ENCODE measurements at regions of chr18 and their contacts with region 1.

Region 1: DNA sequence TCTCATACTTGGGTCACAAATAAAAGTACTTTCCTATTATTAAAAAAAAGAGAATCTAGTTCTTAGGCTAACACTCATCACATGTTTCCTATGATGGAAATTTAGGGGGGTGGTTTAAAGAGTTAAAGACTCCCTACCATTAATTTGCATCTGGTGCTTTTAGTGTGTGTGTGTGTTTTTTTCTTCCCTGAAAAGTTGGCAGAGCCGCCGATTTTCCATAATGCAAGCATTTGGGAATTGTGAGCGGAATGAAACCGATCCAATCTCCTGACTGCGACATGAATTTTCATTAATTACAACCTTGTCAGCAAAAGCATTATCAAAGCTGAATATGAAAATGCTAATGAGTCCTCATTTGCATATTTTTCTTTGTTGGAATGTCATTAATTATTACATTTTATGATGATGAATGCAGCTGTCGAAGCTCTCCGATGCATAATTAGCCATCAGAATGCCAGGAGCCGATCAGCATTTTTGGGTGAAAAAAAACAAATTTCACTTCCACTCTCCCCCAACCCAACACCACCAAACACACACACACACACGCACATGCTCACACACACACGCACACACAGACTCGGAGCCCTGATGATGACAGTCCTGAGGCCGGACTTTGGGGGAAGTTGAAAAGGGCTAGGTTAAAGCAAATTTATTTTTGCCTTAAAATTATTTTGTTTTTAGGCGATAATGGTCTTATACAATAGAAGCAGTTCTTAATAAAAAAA is 165.4 kb downstream of the TCF4 start:
- DNase-seq: peak; percentile 32
- H3K4me3 ChIP-seq: peak overlapping the region; percentile 61
- H3K27ac ChIP-seq: peak overlapping the region; percentile 88
- H3K4me1 ChIP-seq: peaks cover 38% of the 10 kb centered on the region
- H3K27me3 ChIP-seq: no peaks in the 10 kb centered on the region
- CTCF ChIP-seq: no peak

Region 2: GRCh38 chr18:55582325-55582724 is 159.7 kb after region 1 on chr18:
- intact Hi-C with region 1: loop called (anchors 5 kb)
- DNase-seq: no peak
- H3K4me3 ChIP-seq: no peak overlapping the region
- H3K27ac ChIP-seq: peak overlapping the region; percentile 25
- H3K4me1 ChIP-seq: peaks cover 75% of the 10 kb centered on the region
- H3K27me3 ChIP-seq: no peaks in the 10 kb centered on the region
- CTCF ChIP-seq: no peak

Region 3: DNA sequence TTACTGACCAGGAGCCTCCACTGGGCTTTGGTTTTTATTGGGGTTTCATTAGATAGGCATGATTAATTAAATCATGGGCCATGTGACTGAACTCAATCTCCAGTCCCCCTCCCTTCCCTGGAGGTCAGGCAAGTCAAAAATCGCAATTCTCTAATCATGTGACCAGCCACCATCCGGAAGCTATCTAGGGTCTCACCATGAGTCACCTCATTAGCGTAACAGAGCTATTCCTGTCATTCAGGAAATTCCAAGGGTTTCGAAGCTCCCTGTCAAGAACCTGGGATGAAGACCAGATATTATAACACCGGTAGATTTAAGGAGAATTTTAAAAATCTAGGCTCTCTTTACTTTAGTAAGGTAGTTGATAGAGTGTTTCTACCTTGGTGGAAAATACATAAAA is 345.6 kb after region 1 on chr18:
- intact Hi-C with region 1: no loop called
- DNase-seq: no peak
- H3K4me3 ChIP-seq: no peak overlapping the region
- H3K27ac ChIP-seq: no peak overlapping the region
- H3K4me1 ChIP-seq: no peaks in the 10 kb centered on the region
- H3K27me3 ChIP-seq: no peaks in the 10 kb centered on the region
- CTCF ChIP-seq: no peak

Measured in left ventricle myocardium inferior (tissue), 1 donor.